Endothelial cell of umbilical vein (primary cell): ENCODE measurements at regions of chr4 and their contacts with region 1.

Region 1: GRCh38 chr4:76511947-76512346 is 76.9 kb downstream of the SHROOM3 start:
- DNase-seq: no peak
- H3K4me3 ChIP-seq: no peak overlapping the region
- H3K27ac ChIP-seq: no peak overlapping the region
- H3K4me1 ChIP-seq: no peaks in the 10 kb centered on the region
- H3K27me3 ChIP-seq: no peaks in the 10 kb centered on the region
- CTCF ChIP-seq: no peak
- POLR2A ChIP-seq: no peak

Region 2: DNA sequence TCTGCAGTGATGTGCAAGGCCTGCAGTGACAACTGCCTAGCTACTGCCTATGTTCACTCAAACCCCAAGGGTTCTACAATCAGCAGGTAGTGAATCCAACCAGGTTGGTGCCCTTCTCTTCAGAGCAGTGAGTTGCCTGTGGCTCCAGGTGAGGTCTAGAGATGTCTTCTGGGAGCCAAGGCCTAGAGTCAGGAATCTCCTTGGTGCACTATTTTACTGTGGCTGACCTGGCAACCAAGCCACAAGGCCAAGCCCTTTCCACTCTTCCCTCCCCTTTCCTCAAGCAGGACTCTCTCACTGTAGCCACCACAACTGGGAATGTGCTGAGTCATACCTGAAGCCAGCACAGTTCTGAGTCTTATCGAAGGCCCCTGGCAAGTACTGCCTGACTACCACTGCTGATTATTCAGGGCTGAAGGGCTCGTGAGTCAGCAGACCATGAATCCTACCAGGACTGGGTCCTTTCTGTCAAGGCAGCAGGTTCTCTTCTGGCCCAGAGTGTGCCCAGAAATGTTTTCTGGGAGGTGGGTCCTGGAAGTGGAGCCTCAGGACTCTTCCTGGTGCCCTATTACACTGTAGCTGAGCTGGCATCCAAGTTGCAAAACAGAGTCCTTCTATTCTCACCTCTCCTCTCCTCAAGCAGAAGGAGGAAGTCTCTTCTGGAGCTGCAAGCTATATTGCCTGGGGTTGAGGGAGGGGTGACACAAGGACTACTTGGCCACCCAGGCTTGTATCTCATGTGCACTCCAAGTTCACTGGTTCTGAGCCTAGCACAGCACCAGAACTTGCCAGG is 1829.2 kb before region 1 on chr4:
- CTCF ChIA-PET with region 1: no interaction called
- POLR2A ChIA-PET with region 1: no interaction called
- dilution Hi-C with region 1: no loop called
- intact Hi-C with region 1: no loop called
- DNase-seq: peak; percentile 61
- H3K4me3 ChIP-seq: no peak overlapping the region
- H3K27ac ChIP-seq: peak overlapping the region; percentile 12
- H3K4me1 ChIP-seq: peaks cover 5% of the 10 kb centered on the region
- H3K27me3 ChIP-seq: no peaks in the 10 kb centered on the region
- CTCF ChIP-seq: no peak
- POLR2A ChIP-seq: no peak

Region 3: DNA sequence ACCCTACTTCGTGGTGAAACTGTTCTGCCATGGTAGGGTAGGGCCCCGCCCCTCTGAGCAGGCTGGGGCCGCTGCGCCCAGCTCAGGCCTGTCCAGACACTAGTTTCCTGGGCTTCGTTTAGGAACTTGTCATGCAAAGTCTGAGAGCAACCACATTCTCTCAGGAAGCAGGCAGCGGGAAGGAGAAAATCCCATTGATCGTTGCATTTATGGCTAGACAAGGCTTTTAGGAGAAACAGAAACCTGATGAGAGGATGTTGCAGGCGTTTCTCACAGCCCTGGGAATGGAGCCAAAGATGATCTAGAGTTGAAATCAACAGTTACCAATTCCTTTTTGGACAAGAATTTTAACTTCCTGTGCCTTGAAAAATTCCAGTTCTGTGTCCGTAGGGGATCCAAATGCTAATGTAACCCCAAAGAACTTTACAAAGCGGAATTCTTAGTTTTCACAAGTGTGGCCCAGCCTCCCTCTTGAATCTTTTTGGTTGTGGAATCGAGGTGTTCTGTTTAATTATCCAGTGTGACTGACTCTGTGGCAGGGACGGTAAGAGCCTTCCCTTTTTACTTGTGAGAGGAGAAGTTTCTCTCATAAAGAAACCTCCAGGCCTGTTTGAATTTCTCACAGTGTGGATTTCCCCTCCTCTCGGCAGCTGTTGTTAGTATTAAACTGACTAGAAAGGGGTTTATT is 500.1 kb before region 1 on chr4:
- CTCF ChIA-PET with region 1: no interaction called
- POLR2A ChIA-PET with region 1: no interaction called
- dilution Hi-C with region 1: no loop called
- intact Hi-C with region 1: no loop called
- DNase-seq: peak; percentile 40
- H3K4me3 ChIP-seq: no peak overlapping the region
- H3K27ac ChIP-seq: no peak overlapping the region
- H3K4me1 ChIP-seq: peaks cover 5% of the 10 kb centered on the region
- H3K27me3 ChIP-seq: no peaks in the 10 kb centered on the region
- CTCF ChIP-seq: no peak
- POLR2A ChIP-seq: no peak

Region 4: DNA sequence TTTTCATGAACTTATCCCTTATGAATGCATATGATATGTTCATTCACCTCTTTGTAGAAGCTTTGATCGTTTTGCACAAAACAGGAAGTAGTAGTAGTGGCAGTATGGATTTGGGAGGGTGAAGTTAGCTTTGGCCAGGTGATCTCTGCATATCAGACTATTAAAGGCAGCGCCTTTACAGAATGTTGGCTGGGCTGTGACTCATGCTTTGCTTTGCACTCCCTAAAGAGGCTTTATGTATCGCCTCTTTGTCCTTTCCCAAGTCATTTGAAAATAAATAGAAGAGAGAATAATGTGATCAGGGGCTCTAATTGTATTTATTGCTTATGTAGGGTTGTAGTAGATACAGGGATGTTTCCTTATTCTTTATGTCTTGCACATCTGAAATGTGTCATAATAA is 26.5 kb before region 1 on chr4:
- CTCF ChIA-PET with region 1: no interaction called
- POLR2A ChIA-PET with region 1: no interaction called
- dilution Hi-C with region 1: no loop called
- intact Hi-C with region 1: no loop called
- DNase-seq: no peak
- H3K4me3 ChIP-seq: no peak overlapping the region
- H3K27ac ChIP-seq: no peak overlapping the region
- H3K4me1 ChIP-seq: no peaks in the 10 kb centered on the region
- H3K27me3 ChIP-seq: peaks cover 10 to 23% of the 10 kb centered on the region in 2 experiments
- CTCF ChIP-seq: no peak
- POLR2A ChIP-seq: no peak

Region 5: GRCh38 chr4:76589872-76590797 is 78.2 kb after region 1 on chr4:
- CTCF ChIA-PET with region 1: interaction called, 4 read pairs
- POLR2A ChIA-PET with region 1: no interaction called
- dilution Hi-C with region 1: no loop called
- intact Hi-C with region 1: loop called (anchors 2 kb)
- DNase-seq: no peak
- H3K4me3 ChIP-seq: no peak overlapping the region
- H3K27ac ChIP-seq: no peak overlapping the region
- H3K4me1 ChIP-seq: no peaks in the 10 kb centered on the region
- H3K27me3 ChIP-seq: no peaks in the 10 kb centered on the region
- CTCF ChIP-seq: no peak
- POLR2A ChIP-seq: no peak

Region 6: DNA sequence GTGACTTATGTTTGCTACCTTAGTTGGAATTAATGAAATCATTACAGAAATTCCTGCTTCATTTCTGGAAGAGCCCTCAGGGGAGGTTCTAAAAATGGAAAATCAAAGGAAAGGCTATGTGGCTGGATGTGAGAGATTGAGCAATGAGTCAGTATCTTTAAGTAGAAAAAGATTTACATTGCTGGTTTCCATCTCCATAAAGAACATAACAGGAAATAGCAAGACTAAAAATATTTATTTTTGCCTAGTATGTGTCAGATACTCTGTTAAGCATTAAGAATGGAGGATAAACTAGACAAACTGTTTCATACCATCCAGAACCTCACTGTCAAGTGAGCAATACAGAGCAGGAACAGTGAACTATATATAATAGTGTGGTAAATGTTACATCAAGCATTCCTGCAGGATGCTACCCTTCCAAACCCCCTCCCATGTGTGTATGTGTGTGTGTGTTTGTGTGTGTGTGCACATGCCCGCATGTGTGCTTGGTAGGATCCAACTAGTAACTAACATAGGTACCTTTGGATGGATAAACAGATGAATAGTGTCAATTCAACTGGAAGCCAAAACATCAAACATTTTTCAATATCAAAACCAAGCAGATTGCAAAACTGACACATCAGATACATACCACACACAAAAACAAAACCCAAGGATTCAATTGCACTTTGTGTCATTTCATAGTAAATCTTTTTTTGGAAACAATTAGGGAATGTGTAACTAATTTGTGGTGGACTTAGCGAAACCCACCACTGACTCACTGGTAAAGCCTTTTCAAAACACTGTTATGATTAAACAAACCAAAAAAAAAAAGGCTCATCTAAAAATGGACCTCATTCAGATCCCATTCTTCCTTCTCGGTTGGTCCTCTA is 146.5 kb after region 1 on chr4:
- CTCF ChIA-PET with region 1: no interaction called
- POLR2A ChIA-PET with region 1: no interaction called
- dilution Hi-C with region 1: no loop called
- intact Hi-C with region 1: loop called (anchors 1 kb)
- DNase-seq: peak; percentile 79
- H3K4me3 ChIP-seq: no peak overlapping the region
- H3K27ac ChIP-seq: peak overlapping the region; percentile 83
- H3K4me1 ChIP-seq: peaks cover 23% of the 10 kb centered on the region
- H3K27me3 ChIP-seq: no peaks in the 10 kb centered on the region
- CTCF ChIP-seq: no peak
- POLR2A ChIP-seq: peak; percentile 39

Region 7: DNA sequence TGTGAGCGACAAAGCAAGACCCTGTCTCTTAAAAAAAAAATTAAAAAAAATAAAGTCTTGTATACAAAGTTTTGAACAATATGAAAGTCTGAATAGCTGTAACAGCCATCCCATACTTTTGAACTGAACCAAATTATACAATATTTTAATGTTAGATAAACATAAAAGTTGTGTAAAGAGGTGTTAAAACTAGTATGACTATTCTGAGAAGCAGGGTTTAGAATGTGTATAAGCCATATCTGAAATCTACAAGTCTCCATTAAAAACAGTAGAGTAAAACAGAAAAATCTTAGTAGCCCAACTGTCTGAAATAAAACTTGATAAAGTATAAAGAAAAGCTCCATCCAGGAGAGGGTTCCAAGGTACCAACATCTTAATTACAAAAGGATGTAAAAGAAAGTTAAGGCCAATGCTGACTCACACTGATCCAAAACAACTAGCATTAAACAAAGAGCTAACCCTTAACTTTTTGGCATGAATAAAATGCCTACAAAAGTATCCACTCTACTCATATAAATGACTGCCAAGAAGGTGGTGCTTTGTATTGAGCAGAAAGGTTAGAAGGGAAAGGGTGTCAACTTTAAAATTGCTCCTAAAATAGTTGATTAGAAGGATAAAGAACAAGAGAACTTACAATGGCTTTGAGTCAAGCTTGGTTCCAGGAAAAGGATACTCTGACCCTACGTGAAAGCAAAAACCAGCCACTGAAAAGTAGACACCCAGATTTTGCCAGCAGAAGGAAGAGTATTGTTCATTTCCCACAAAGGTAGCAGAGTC is 1288.7 kb after region 1 on chr4:
- CTCF ChIA-PET with region 1: no interaction called
- POLR2A ChIA-PET with region 1: no interaction called
- dilution Hi-C with region 1: no loop called
- intact Hi-C with region 1: no loop called
- DNase-seq: peak; percentile 74
- H3K4me3 ChIP-seq: no peak overlapping the region
- H3K27ac ChIP-seq: peak overlapping the region; percentile 57
- H3K4me1 ChIP-seq: peaks cover 20% of the 10 kb centered on the region
- H3K27me3 ChIP-seq: no peaks in the 10 kb centered on the region
- CTCF ChIP-seq: no peak
- POLR2A ChIP-seq: no peak